ENCODE measurements at regions of chr10 and their contacts with region 1.

Region 1: GRCh38 chr10:37434091-37434490 is 308.7 kb downstream of the ANKRD30A start:
- DNase-seq: peak; percentile 87
- ATAC-seq: peak; percentile 90
- H3K4me3 ChIP-seq: no peak overlapping the region
- H3K27ac ChIP-seq: no peak overlapping the region
- H3K4me1 ChIP-seq: no peaks in the 10 kb centered on the region
- H3K27me3 ChIP-seq: no peaks in the 10 kb centered on the region
- CTCF ChIP-seq: peak; percentile 98

Region 2: GRCh38 chr10:37289840-37290464 is 144.1 kb before region 1 on chr10:
- CTCF ChIA-PET with region 1: no interaction called
- POLR2A ChIA-PET with region 1: no interaction called
- intact Hi-C with region 1: no loop called
- DNase-seq: peak; percentile 99
- ATAC-seq: peak; percentile 96
- H3K4me3 ChIP-seq: no peak overlapping the region
- H3K27ac ChIP-seq: no peak overlapping the region
- H3K4me1 ChIP-seq: peaks cover 16% of the 10 kb centered on the region
- H3K27me3 ChIP-seq: no peaks in the 10 kb centered on the region
- CTCF ChIP-seq: no peak

Region 3: DNA sequence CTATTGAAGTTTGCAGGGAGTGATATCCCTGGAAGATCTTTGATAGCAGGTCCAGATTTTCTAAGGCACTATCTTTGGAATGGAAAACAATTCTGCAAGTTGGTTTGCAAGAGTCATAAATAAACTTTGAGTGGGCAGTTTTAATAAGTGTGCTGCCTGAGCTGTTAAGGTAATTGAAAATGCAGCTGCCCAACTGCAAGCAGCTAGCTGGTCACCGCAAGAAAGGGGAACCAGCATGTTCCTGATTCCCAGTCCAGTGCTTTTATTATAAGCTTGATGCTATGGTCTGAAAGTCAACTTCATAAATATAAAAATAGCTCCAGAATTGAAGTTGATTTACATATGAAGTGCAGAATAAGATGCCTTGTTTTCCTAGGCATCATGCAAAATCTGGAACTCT is 115.0 kb after region 1 on chr10:
- CTCF ChIA-PET with region 1: no interaction called
- POLR2A ChIA-PET with region 1: no interaction called
- intact Hi-C with region 1: no loop called
- DNase-seq: no peak
- ATAC-seq: no peak
- H3K4me3 ChIP-seq: no peak overlapping the region
- H3K27ac ChIP-seq: no peak overlapping the region
- H3K4me1 ChIP-seq: no peaks in the 10 kb centered on the region
- H3K27me3 ChIP-seq: no peaks in the 10 kb centered on the region
- CTCF ChIP-seq: no peak

Region 4: GRCh38 chr10:37707832-37708578 is 273.9 kb after region 1 on chr10:
- CTCF ChIA-PET with region 1: interaction called, 4 read pairs
- POLR2A ChIA-PET with region 1: no interaction called
- intact Hi-C with region 1: loop called (anchors 1 kb)
- DNase-seq: peak; percentile 44
- ATAC-seq: peak; percentile 51
- H3K4me3 ChIP-seq: no peak overlapping the region
- H3K27ac ChIP-seq: no peak overlapping the region
- H3K4me1 ChIP-seq: peaks cover 6% of the 10 kb centered on the region
- H3K27me3 ChIP-seq: no peaks in the 10 kb centered on the region
- CTCF ChIP-seq: peak; percentile 62; the same call in 1 of the 2 replicates

Region 5: DNA sequence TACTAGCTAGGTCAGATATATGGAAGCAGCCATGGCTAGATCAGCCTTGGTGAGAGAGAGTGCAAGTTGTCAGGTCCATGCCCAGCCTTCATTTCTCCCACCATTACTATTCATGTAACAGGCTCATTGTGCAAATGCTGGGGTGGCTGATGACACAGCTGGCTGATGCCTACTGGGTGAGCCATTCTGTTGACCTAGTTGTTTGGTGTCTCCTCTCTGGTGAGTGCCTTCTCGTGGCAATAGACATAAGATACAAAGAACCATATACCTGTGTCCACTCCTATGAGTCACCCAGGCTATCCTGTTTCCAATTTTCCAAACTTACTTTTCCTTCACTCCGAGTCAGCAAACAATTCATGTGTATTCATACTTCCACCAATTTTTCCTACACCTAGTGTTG is 496.3 kb after region 1 on chr10:
- CTCF ChIA-PET with region 1: no interaction called
- POLR2A ChIA-PET with region 1: no interaction called
- intact Hi-C with region 1: loop called (anchors 10 kb)
- DNase-seq: peak; percentile 77
- ATAC-seq: peak; percentile 81
- H3K4me3 ChIP-seq: no peak overlapping the region
- H3K27ac ChIP-seq: peak overlapping the region; percentile 7
- H3K4me1 ChIP-seq: peaks cover 9% of the 10 kb centered on the region; the same call in 1 of the 2 replicates
- H3K27me3 ChIP-seq: no peaks in the 10 kb centered on the region
- CTCF ChIP-seq: no peak; the same call in 1 of the 2 replicates